PC-9 (cell line): ENCODE measurements at regions of chr2 and their contacts with region 1.

Region 1: DNA sequence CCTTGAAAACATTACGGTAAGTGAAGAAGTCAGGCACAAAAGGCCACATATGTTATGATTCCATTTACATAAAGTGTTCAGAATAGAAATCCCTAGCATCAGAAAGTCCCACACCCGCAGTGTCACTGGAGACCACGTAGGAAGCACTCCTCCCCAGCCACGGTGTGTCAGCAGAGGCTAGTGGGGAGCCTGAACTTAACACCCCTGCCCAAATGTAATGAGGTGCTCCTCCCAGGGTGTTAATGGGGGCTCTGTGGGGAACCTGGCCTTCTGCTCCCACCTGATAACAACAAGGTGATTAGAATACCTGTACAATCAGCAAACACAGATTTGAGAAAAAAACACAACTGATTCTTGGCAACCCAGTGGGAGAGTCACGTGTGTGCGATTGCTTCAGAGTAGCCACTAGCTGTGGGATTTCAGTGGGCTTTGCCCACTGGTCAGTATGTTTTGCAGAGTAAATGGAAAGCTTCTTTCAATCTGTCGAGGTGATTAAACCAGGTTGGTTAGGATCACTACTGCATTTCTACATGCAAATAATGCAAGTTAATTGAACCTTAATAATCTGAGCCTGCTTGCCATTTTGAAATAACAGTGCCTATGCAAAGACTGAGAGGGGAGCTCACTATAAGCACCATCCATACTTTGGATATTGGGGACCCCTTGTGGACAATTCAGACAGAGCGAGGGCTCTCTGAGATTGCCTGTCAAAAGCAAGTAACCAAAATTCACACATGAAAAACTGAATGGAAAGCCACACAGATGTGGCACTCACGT is 20.6 kb upstream of the ATRAID start:
- DNase-seq: peak; percentile 47 to 60
- H3K4me3 ChIP-seq: no peak overlapping the region
- H3K27ac ChIP-seq: no peak overlapping the region
- H3K4me1 ChIP-seq: no peaks in the 10 kb centered on the region
- H3K27me3 ChIP-seq: no peaks in the 10 kb centered on the region
- CTCF ChIP-seq: peak; percentile 84

Region 2: DNA sequence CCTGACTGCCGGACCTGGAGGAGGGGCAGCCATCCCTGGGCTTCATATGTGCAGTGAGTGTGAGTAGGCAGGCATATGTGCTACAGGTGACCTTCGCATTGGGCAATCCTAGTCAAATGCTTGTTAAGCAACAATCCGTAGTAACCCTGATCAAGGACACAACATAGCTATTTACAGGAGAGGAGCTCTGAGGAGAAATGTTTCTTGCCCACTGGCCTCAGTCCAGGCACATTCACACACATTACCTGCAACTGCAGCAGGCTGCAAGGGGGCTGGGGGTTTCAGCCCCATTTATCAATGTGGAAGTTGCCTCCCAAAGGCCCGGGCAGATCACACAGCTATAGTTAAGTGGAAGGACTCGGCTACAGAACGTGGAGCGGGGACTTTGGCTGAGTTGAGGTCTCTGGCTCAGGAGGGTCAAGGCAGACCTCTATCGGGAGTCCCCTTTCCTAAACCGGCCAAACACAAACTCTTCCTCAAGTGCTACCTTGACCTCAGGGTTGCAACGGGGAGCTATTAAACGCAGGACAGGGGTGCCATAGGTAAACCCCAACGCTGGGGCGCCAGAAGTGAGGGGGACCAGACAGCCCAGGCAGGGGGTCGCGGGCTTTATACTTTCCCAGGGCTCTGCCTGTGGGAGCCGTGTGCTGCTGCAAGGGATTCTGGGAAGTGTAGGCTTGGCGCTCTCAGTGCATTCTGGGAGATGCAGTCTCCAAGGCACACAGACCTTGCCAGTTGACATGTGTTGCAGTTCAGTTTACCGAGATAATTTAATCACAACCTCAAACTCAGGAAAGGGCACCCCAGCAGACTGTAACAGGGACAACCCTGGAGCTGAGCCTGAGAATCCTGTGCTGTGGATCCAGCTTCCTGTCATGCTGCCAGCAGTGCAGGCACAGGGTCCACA is 95.2 kb before region 1 on chr2:
- CTCF ChIA-PET with region 1: no interaction called
- POLR2A ChIA-PET with region 1: no interaction called
- intact Hi-C with region 1: loop called (anchors 1 kb)
- DNase-seq: no peak
- H3K4me3 ChIP-seq: peak overlapping the region; percentile 39; the same call in 1 of the 2 replicates
- H3K27ac ChIP-seq: no peak overlapping the region
- H3K4me1 ChIP-seq: no peaks in the 10 kb centered on the region
- H3K27me3 ChIP-seq: no peaks in the 10 kb centered on the region
- CTCF ChIP-seq: no peak

Region 3: DNA sequence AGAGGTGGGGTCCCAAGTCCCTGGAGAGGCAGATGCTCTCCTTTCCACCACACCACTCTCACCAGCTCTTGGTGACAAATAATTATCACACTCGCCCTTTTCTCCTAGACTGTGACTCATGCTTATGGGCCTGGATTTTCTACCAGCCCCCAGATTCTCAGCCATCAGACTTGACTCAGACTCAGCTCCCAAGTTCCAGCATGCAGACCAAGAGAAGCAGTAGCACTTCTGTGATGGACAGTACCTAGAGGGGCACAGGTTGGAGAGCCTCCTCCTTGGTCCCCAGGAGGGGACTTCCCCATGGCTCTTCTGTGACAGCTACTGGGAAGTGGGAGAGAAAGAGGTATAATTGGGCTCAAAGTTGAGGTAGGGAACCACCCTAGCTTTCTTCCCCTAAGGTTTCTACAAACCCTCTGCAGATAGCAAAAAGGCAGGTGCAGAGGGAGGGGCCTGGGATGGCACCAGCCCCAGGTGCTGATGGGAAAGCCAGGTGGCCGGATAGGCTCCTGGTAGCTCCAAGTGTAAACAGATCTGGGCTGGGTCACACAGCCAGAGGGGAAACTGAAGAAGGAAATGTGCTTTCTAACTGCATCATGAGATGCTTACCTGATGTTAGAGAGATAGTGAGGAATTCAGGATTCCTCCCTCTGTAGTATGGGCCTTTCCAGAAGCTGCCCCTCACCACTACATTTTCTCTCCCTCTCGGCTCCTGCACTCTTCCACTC is 38.3 kb before region 1 on chr2:
- CTCF ChIA-PET with region 1: no interaction called
- POLR2A ChIA-PET with region 1: no interaction called
- intact Hi-C with region 1: no loop called
- DNase-seq: peak; percentile 21 to 37
- H3K4me3 ChIP-seq: no peak overlapping the region
- H3K27ac ChIP-seq: no peak overlapping the region
- H3K4me1 ChIP-seq: no peaks in the 10 kb centered on the region
- H3K27me3 ChIP-seq: no peaks in the 10 kb centered on the region
- CTCF ChIP-seq: no peak

Region 4: GRCh38 chr2:27177441-27178351 is 13.5 kb before region 1 on chr2:
- CTCF ChIA-PET with region 1: no interaction called
- POLR2A ChIA-PET with region 1: no interaction called
- intact Hi-C with region 1: no loop called
- DNase-seq: no peak
- H3K4me3 ChIP-seq: no peak overlapping the region
- H3K27ac ChIP-seq: no peak overlapping the region
- H3K4me1 ChIP-seq: no peaks in the 10 kb centered on the region
- H3K27me3 ChIP-seq: peaks cover 17% of the 10 kb centered on the region; the same call in 1 of the 2 replicates
- CTCF ChIP-seq: no peak

Region 5: GRCh38 chr2:27211829-27212627 is 20.8 kb after region 1 on chr2 and contains the starts of genes ATRAID and SLC5A6:
- CTCF ChIA-PET with region 1: no interaction called
- POLR2A ChIA-PET with region 1: no interaction called
- intact Hi-C with region 1: loop called (anchors 1 kb)
- DNase-seq: peak; percentile 77 to 89
- H3K4me3 ChIP-seq: peak within 1 kb of the TSS; percentile 82
- H3K27ac ChIP-seq: peak within 1 kb of the TSS; percentile 82
- H3K4me1 ChIP-seq: peaks cover 36% of the 10 kb centered on the region
- H3K27me3 ChIP-seq: no peaks in the 10 kb centered on the region
- CTCF ChIP-seq: no peak
- total RNA-seq, gene ATRAID: 92.8 and 126 TPM in 2 replicates
- total RNA-seq, gene SLC5A6: 49.0 and 70.0 TPM in 2 replicates

Region 6: DNA sequence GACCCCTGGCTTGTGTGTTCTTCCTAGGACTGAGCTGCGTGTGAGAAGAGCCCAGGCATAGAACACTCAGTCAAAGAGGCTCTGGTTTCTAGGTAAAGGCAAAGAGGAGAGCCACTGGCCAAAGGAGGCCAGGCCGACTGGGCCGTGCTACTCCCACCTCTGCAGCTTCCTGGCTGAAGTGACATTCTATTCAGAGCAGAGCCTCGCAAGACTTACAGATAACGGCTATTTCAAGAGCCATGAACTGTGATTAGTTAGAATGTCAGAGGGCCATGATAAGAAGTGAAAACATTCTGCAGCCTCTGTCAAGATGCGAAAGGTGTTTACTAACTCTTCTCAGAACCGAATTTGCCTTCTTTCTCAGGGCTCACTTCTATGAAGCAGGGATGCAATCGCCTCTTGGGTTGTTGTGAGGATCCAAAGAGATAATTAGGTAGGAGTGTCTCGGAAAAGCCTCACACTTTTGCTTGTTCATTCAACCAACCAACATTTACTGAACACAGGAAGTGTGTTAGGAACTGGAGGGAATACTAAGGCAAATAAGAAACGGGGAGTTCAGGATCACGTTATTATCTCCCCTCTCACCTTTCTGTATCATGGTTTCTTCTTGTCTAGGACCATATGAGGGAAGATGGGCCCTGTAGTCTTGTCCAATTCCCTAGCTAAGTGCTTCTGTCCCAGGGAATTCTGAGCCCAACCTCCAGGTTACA is 80.5 kb after region 1 on chr2:
- CTCF ChIA-PET with region 1: interaction called, 15 read pairs
- POLR2A ChIA-PET with region 1: no interaction called
- intact Hi-C with region 1: no loop called
- DNase-seq: no peak
- H3K4me3 ChIP-seq: no peak overlapping the region
- H3K27ac ChIP-seq: no peak overlapping the region
- H3K4me1 ChIP-seq: no peaks in the 10 kb centered on the region
- H3K27me3 ChIP-seq: no peaks in the 10 kb centered on the region
- CTCF ChIP-seq: no peak